ENCODE measurements at regions of chr4 and their contacts with region 1.

Region 1: DNA sequence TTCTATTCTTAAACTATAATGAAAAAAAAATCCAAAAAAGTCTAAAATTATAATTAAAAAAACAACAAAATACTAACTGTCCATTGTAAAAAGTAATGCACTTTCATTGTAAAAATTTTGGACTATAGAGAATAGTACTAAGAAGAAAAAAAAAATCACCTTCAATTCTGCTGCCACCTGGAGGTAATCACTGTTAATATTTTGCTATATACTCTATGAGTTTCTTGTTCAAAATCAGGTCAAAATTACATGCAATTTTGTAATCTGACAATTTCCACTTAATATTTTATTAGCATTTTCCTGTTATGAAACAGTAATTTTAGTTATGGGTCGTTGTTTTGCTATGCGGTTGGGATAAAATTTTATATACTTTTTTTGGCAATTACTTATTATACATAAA is 62.0 kb downstream of the HTT start:
- DNase-seq: no peak
- H3K4me3 ChIP-seq: no peak overlapping the region
- H3K4me3 Mint-ChIP-seq: no peak overlapping the region
- H3K27ac Mint-ChIP-seq: no peak overlapping the region
- H3K4me1 ChIP-seq: no peaks in the 10 kb centered on the region
- H3K4me1 Mint-ChIP-seq: no peaks in the 10 kb centered on the region
- H3K27me3 ChIP-seq: no peaks in the 10 kb centered on the region
- H3K27me3 Mint-ChIP-seq: no peaks in the 10 kb centered on the region
- CTCF ChIP-seq: peak in 1 of 2 experiments; percentile 22

Region 2: DNA sequence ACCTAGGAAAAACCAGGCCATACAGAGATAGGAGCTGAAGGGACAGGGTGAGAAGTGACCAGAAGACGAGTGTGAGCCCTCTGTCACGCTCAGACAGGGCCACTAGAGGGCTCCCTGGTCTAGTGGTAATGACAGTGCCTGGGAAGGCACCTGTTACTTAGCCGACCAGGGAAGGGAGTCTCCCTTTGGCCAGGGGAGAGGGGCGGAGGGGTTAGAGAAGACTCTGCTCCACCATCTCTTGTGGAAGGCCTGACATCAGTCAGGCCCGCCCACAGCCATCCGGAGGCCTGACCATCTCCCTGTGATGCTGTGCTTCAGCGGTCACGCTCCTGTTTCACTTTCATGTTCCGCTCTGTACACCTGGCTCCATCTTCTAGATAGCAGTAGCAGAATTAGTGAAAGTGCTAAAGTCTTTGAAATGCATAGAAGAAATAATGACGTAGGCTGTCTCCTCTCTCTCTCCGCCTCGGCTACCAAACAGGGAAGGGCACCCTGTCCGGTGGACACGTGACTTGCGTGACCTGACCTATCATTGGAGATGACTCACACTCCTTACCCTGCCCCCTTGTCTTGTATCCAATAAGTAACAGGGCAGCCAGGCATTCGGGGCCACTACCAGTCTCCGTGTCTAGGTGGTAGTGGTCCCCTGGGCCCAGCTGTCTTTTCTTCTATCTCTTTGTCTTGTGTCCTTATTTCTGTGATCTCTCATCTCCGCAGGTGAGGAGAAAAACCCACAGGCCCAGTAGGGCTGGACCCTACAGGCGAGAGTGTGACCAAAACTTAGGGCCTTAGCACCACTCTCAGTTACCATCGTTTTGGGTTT is 88.8 kb before region 1 on chr4:
- CTCF ChIA-PET with region 1: no interaction called
- POLR2A ChIA-PET with region 1: no interaction called
- intact Hi-C with region 1: loop called (anchors 2 kb)
- DNase-seq: peak; percentile 78 to 80
- H3K4me3 ChIP-seq: no peak overlapping the region
- H3K4me3 Mint-ChIP-seq: peak overlapping the region; percentile 70
- H3K27ac Mint-ChIP-seq: no peak overlapping the region
- H3K4me1 ChIP-seq: peaks cover 14% of the 10 kb centered on the region
- H3K4me1 Mint-ChIP-seq: peaks cover 13% of the 10 kb centered on the region
- H3K27me3 ChIP-seq: no peaks in the 10 kb centered on the region
- H3K27me3 Mint-ChIP-seq: no peaks in the 10 kb centered on the region
- CTCF ChIP-seq: peak; percentile 54 to 84